Ascending aorta (tissue), 2 donors: ENCODE measurements at regions of chr11 and their contacts with region 1.

Region 1: GRCh38 chr11:45804761-45805304 is at the start of gene SLC35C1:
- DNase-seq: peak; percentile 89 to 98
- H3K4me3 ChIP-seq: peak within 1 kb of the TSS; percentile 89 to 99
- H3K27ac ChIP-seq: peak within 1 kb of the TSS; percentile 84 to 90
- H3K4me1 ChIP-seq: peaks cover 9 to 29% of the 10 kb centered on the region in 2 donors
- H3K27me3 ChIP-seq: no peaks in the 10 kb centered on the region
- CTCF ChIP-seq: peak in 2 of 3 experiments; percentile 4 to 14
- total RNA-seq, gene SLC35C1: 47.7 TPM

Region 2: GRCh38 chr11:44949160-44950030 is 855.4 kb before region 1 on chr11:
- intact Hi-C with region 1: loop called (anchors 10 kb)
- DNase-seq: no peak
- H3K4me3 ChIP-seq: peak overlapping the region; percentile 83 to 91
- H3K27ac ChIP-seq: peak overlapping the region; percentile 58 to 59
- H3K4me1 ChIP-seq: no peaks in the 10 kb centered on the region
- H3K27me3 ChIP-seq: no peaks in the 10 kb centered on the region
- CTCF ChIP-seq: peak; percentile 16 to 46 (median 45)

Region 3: GRCh38 chr11:45917623-45918330 is 112.9 kb after region 1 on chr11 and contains the start of gene PEX16:
- intact Hi-C with region 1: loop called (anchors 5 kb)
- DNase-seq: peak; percentile 93 to 99
- H3K4me3 ChIP-seq: peak within 1 kb of the TSS; percentile 67 to 91
- H3K27ac ChIP-seq: peak within 1 kb of the TSS; percentile 90 to 91
- H3K4me1 ChIP-seq: peaks cover 5 to 18% of the 10 kb centered on the region in 2 donors
- H3K27me3 ChIP-seq: peaks cover 11% of the 10 kb centered on the region
- CTCF ChIP-seq: no peak
- total RNA-seq, gene PEX16: 77.9 TPM

Region 4: GRCh38 chr11:46183819-46184218 is 379.0 kb after region 1 on chr11:
- intact Hi-C with region 1: no loop called
- DNase-seq: no peak
- H3K4me3 ChIP-seq: no peak overlapping the region
- H3K27ac ChIP-seq: no peak overlapping the region
- H3K4me1 ChIP-seq: no peaks in the 10 kb centered on the region
- H3K27me3 ChIP-seq: no peaks in the 10 kb centered on the region
- CTCF ChIP-seq: no peak